Astrocyte of the cerebellum (primary cell): ENCODE measurements at regions of chr2 and their contacts with region 1.

Region 1: DNA sequence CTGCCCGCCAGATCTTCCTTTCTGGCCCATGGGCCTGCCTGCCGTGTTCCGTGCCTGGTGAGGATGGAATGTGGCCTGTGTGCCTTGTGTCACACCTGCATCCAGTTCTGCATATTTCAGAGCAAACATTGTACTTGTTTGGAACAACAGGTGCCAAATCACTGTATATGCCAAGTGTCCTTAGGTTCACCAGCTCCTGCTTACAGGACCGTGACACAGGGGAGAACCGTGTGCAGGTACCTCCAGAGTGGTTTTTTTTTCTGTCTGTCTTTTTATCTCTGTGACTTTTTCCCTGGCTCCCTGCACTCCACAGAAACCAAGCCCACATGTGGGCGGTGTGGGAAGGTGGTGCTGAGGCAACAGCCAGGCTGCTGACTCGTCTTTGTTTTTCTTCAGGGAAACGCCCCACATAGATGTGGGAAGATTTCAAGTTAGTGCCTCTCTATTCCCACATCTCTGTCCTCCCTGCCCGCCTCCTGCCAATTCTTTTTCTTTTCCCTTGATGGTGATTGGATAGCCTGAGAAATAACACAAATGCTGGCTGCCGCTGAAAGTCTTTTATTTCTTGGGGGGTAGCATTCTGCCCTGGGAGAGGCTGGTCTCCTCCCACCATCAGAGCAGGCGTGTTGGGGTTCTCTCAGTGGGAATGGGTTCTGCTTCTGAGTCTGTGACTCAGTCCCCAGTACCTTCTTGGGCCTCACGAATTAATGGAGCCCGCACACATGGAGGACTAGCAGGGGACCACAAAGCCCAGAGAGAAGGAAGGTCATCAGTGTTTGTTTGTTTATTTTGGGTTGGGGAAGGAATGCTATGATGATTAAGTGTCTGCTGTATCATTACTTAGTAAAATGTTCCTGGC is 21.4 kb downstream of the GRHL1 start:
- DNase-seq: no peak
- H3K4me3 ChIP-seq: no peak overlapping the region
- CTCF ChIP-seq: no peak

Region 2: GRCh38 chr2:9836524-9836923 is 136.3 kb before region 1 on chr2:
- in situ Hi-C with region 1: loop called (anchors 5 kb)
- DNase-seq: no peak
- H3K4me3 ChIP-seq: no peak overlapping the region
- CTCF ChIP-seq: no peak

Region 3: DNA sequence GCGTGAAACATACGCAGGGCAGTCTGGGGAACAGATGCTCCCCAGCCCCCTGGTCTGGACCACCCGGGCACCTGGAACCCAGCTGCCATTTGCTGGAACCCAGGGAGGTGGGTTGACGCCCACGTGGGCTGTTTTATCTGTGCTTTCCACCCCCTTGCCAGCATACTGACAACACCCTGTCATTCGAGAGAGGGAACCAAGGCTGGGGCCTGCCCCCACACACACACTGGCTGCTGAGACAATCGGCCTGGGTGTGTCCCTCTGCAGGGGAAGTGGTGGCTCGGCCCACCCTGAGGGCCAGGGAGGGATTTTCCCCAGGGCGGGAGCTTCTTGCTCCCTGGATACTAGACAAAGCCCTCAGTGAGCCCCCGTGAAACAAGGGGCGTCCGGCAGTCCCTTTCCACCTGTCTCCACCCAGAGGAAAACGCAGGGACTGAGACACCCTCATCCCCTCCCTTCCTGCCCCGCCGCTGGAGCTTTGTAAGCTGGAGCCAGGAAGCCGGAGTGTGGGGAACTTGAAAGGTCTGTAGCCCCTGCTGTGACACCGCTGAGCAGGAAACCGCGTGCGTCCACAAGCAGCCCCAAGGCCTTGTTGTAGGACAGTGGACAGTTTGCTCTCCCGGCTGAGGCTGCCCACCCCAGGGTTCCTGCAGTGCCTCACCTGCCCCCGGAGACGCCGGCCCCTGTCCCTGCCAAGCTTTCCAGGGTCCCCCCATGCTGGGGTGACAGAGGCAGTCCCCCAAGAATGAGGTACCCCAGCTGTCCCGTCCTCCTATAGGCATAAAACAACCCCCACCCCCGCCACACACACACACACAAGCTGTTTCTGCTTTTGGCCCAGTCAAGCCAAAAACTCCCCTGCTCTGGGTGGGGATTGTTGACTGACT is 56.4 kb after region 1 on chr2:
- in situ Hi-C with region 1: no loop called
- DNase-seq: no peak
- H3K4me3 ChIP-seq: no peak overlapping the region
- CTCF ChIP-seq: no peak